ENCODE measurements at regions of chr3 and their contacts with region 1.

Region 1: GRCh38 chr3:150408221-150409102 is at the start of gene TSC22D2:
- DNase-seq: peak; percentile 94 to 99 (median 98)
- ATAC-seq: peak; percentile 79
- H3K4me3 ChIP-seq: peak within 1 kb of the TSS; percentile 96
- H3K4me3 Mint-ChIP-seq: peak within 1 kb of the TSS; percentile 88 to 98 (median 91)
- H3K27ac ChIP-seq: peak within 1 kb of the TSS; percentile 98
- H3K27ac Mint-ChIP-seq: peak within 1 kb of the TSS; percentile 89 to 100 (median 98)
- H3K4me1 ChIP-seq: peaks cover 7 to 8% of the 10 kb centered on the region in 2 donors
- H3K4me1 Mint-ChIP-seq: peaks cover 25 to 41% (median 39%) of the 10 kb centered on the region in 7 donors
- H3K27me3 ChIP-seq: no peaks in the 10 kb centered on the region
- H3K27me3 Mint-ChIP-seq: peaks cover 0 to 13% (median 0%) of the 10 kb centered on the region in 5 donors
- total RNA-seq, gene TSC22D2: 17.9 to 42.1 (median 27.3) TPM

Region 2: DNA sequence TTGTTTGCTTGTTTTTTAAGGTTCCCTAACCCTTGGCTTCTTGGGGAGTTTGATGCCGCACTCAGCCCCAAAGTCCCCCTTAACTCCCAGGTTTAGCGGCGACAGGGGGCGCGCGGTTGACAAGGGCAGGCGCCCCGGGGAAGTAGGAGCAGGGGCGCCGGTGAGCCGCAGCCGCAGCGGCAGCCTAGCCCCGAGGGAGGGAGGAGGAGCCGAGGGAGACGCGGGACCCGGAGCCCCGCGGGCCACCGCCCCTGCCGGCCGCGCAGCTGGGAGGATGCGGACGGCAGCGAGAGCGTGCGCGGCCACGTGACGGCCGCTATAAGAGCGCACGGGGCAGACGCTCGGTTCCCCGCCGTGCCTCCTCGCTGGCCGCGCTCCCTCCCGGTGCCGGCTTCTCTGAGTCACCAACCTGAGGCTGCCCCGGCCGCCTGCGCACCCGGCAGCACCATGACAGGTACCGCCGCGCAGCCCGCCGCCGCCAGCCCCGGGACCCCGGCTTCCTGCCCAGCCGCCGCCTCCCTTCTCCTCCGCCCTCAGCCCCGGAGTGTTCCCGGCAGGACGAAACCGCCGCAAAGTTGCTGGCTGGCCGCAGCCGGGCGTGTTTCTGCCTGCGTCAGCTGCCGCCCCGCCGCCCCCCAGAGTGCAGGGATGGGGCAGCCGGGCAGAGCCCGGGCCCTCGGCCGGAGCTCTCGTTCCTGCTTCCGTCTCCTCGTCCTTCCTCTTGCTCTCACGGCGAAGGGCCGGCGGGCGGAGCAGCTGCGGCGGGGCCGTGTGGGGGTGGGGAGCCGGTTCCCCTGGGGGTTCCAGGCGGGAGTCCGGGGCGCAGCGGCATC is 1417.1 kb before region 1 on chr3 and contains the start of gene GYG1:
- CTCF ChIA-PET with region 1: no interaction called
- POLR2A ChIA-PET with region 1: no interaction called
- intact Hi-C with region 1: loop called in 1 of 2 experiments (anchors 2 kb)
- DNase-seq: peak; percentile 56 to 78 (median 70)
- ATAC-seq: peak; percentile 91
- H3K4me3 ChIP-seq: peak within 1 kb of the TSS; percentile 77
- H3K4me3 Mint-ChIP-seq: peak within 1 kb of the TSS; percentile 70 to 91 (median 87)
- H3K27ac ChIP-seq: peak within 1 kb of the TSS; percentile 76
- H3K27ac Mint-ChIP-seq: peak within 1 kb of the TSS; percentile 41 to 87 (median 80)
- H3K4me1 ChIP-seq: peaks cover 8 to 16% of the 10 kb centered on the region in 2 donors
- H3K4me1 Mint-ChIP-seq: peaks cover 5 to 41% (median 28%) of the 10 kb centered on the region in 7 donors
- H3K27me3 ChIP-seq: no peaks in the 10 kb centered on the region
- H3K27me3 Mint-ChIP-seq: peaks cover 0 to 3% (median 0%) of the 10 kb centered on the region in 5 donors
- total RNA-seq, gene GYG1: 15.5 to 39.3 (median 16.2) TPM

Region 3: DNA sequence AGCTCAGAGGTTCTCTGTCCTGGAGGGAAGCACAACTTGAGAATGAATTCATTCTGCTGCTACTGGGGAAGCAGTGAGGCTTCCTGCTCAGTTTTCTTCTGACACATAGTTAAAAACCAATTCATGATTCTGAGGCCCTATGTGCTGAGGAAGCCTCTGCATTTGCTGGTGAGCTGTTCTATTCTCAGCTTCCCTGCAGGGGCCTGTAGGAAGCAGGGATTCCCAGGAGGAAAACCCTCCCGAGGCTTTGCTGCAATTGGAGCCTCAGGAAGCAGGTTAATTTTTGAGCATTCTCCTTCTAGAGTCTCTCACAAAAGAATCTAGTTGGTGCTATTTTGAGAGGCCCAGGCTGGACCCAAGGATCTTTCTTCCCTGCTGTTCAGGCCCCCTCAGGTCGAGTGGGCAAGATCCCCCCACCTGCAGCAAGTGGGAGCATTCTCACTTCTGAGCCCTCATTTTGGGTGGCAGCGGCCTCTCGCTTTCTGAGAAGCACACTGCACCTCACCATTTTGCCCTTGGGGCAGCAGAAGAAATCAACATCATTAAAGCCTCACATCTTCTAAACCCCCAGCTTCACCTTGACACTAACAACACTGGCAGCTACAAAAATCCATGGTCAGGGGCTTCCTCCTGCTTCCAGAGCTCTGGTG is 197.9 kb before region 1 on chr3:
- CTCF ChIA-PET with region 1: no interaction called
- POLR2A ChIA-PET with region 1: no interaction called
- intact Hi-C with region 1: no loop called
- DNase-seq: no peak
- ATAC-seq: no peak
- H3K4me3 ChIP-seq: no peak overlapping the region
- H3K4me3 Mint-ChIP-seq: no peak overlapping the region
- H3K27ac ChIP-seq: no peak overlapping the region
- H3K27ac Mint-ChIP-seq: no peak overlapping the region
- H3K4me1 ChIP-seq: no peaks in the 10 kb centered on the region
- H3K4me1 Mint-ChIP-seq: no peaks in the 10 kb centered on the region
- H3K27me3 ChIP-seq: no peaks in the 10 kb centered on the region
- H3K27me3 Mint-ChIP-seq: peaks cover 15 to 41% (median 25%) of the 10 kb centered on the region in 5 donors

Region 4: DNA sequence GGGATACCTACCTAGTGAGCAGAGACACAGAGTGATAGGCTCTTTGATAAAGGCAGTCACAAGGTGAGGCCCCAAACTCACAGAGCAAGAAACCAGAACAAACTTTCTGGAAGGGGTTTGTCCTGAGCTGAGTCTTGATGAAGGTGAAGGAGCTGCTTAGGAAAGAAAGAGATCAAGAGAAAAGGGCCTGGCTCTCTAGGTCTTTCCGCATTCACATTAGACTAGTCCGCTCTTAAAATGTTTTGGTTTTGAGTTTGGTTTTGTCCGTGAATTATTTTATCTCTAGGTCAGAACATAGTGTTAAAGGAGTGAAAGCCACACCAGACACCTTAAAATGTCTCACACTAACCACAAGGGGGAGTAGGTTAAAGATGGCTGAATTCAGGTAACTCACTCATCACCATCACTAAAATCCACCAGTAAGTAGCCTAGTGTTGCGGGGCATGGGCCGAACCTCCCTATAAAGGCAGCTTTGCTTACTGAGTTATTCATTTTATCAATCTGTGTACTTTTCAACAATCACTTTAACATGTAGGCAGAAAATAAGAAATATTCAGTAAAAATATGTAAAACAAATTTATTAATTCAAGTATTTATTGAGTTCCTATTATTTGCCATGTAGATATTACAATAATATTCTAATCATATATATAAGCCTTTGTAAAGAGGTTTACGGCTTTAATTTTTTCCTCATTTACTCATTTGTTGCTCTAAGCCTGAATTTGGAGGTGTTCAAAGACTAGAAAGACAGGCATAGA is 121.9 kb before region 1 on chr3:
- CTCF ChIA-PET with region 1: interaction called, 3 read pairs
- POLR2A ChIA-PET with region 1: no interaction called
- intact Hi-C with region 1: loop called in 1 of 2 experiments (anchors 1 kb)
- DNase-seq: peak in 7 of 9 donors; percentile 17 to 61 (median 50)
- ATAC-seq: peak; percentile 72
- H3K4me3 ChIP-seq: no peak overlapping the region
- H3K4me3 Mint-ChIP-seq: no peak overlapping the region
- H3K27ac ChIP-seq: no peak overlapping the region
- H3K27ac Mint-ChIP-seq: no peak overlapping the region
- H3K4me1 ChIP-seq: no peaks in the 10 kb centered on the region
- H3K4me1 Mint-ChIP-seq: no peaks in the 10 kb centered on the region
- H3K27me3 ChIP-seq: no peaks in the 10 kb centered on the region
- H3K27me3 Mint-ChIP-seq: peaks cover 4 to 69% (median 14%) of the 10 kb centered on the region in 5 donors

Region 5: GRCh38 chr3:150421799-150422548 is 13.5 kb after region 1 on chr3:
- CTCF ChIA-PET with region 1: interaction called, 4 read pairs
- POLR2A ChIA-PET with region 1: interaction called, 11 read pairs
- intact Hi-C with region 1: loop called in 1 of 2 experiments (anchors 1 kb)
- DNase-seq: no peak
- ATAC-seq: no peak
- H3K4me3 ChIP-seq: no peak overlapping the region
- H3K4me3 Mint-ChIP-seq: no peak overlapping the region
- H3K27ac ChIP-seq: no peak overlapping the region
- H3K27ac Mint-ChIP-seq: peak overlapping the region in 2 of 9 donors; percentile 51 to 53
- H3K4me1 ChIP-seq: peaks cover 0 to 8% of the 10 kb centered on the region in 2 donors
- H3K4me1 Mint-ChIP-seq: peaks cover 24 to 77% (median 68%) of the 10 kb centered on the region in 7 donors
- H3K27me3 ChIP-seq: no peaks in the 10 kb centered on the region
- H3K27me3 Mint-ChIP-seq: no peaks in the 10 kb centered on the region

Region 6: DNA sequence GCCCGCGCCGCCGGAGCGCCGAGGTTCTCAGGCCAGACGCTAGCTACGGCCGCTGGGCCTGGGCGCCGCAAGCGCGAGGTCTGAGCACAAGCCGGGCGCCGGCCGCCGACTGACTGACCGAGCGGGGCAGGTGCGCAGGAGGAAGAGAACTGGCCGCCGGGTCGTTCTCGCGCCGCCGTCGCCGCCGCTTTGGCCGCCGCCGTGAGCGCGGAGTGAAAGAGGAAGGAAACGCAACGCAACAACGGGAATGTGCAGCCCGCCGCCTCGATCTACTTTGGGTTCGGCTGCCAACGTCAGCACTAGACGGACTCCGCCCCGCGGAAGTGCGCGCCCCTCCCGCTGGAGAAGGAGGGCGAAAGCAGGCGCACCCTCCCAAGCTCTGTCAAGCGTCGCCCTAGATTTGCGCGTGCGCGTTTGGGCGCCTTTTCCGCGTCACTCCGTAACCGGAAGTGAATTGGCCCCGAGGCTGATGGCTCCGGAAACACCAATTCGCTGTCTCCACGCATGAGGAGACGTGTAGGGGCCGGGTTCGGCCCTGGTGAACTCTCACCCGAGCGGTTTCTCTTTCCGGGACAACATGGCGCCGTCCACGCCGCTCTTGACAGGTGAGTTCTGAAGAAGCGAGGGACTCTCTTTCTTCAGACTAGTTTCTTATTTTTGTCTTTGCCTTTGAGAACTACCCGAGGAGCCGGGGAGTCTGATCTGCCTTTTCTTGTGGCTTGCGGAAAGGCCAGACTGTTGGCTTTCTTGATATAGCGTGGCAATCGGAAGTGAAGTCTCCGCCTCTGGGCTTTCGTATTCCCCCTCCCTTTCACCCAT is 138.0 kb after region 1 on chr3 and contains the starts of genes EIF2A and SERP1:
- CTCF ChIA-PET with region 1: no interaction called
- POLR2A ChIA-PET with region 1: interaction called, 69 read pairs
- intact Hi-C with region 1: loop called (anchors 1 kb)
- DNase-seq: peak; percentile 97 to 100 (median 100)
- ATAC-seq: peak; percentile 94
- H3K4me3 ChIP-seq: peak within 1 kb of the TSS; percentile 78
- H3K4me3 Mint-ChIP-seq: peak within 1 kb of the TSS; percentile 88 to 99 (median 96)
- H3K27ac ChIP-seq: peak within 1 kb of the TSS; percentile 96
- H3K27ac Mint-ChIP-seq: peak within 1 kb of the TSS; percentile 93 to 100 (median 98)
- H3K4me1 ChIP-seq: peaks cover 15 to 23% of the 10 kb centered on the region in 2 donors
- H3K4me1 Mint-ChIP-seq: peaks cover 34 to 84% (median 79%) of the 10 kb centered on the region in 7 donors
- H3K27me3 ChIP-seq: no peaks in the 10 kb centered on the region
- H3K27me3 Mint-ChIP-seq: no peaks in the 10 kb centered on the region
- total RNA-seq, gene EIF2A: 94.7 to 135 (median 105) TPM
- total RNA-seq, gene SERP1: 89.4 to 120 (median 115) TPM

Region 7: DNA sequence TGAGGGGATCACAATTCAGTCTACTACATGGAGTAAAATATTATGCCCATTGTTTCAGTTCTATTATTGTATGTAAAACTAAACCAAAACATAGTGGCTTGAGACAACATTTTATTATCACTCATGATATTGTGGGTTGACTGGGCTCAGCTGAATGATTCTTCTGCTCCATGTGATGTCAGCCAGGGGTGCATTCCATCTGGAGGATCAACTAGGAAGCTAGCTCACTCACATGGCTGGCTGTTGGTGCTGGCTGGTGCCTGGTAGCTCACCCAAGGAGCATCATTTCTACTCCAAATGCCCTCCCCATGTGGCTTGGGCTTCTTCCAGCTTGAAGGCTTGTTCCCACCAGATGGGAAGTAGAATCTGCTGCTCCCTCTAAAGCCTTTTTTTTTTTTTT is 615.9 kb after region 1 on chr3:
- CTCF ChIA-PET with region 1: no interaction called
- POLR2A ChIA-PET with region 1: no interaction called
- intact Hi-C with region 1: no loop called
- DNase-seq: no peak
- ATAC-seq: no peak
- H3K4me3 ChIP-seq: no peak overlapping the region
- H3K4me3 Mint-ChIP-seq: no peak overlapping the region
- H3K27ac ChIP-seq: no peak overlapping the region
- H3K27ac Mint-ChIP-seq: no peak overlapping the region
- H3K4me1 ChIP-seq: no peaks in the 10 kb centered on the region
- H3K4me1 Mint-ChIP-seq: no peaks in the 10 kb centered on the region
- H3K27me3 ChIP-seq: peaks cover 0 to 6% of the 10 kb centered on the region in 2 donors
- H3K27me3 Mint-ChIP-seq: peaks cover 0 to 14% (median 13%) of the 10 kb centered on the region in 5 donors

Region 8: GRCh38 chr3:151276687-151277042 is 868.2 kb after region 1 on chr3:
- CTCF ChIA-PET with region 1: no interaction called
- POLR2A ChIA-PET with region 1: no interaction called
- intact Hi-C with region 1: loop called in 1 of 2 experiments (anchors 10 kb)
- DNase-seq: peak in 8 of 9 donors; percentile 12 to 56 (median 25)
- ATAC-seq: peak; percentile 85
- H3K4me3 ChIP-seq: no peak overlapping the region
- H3K4me3 Mint-ChIP-seq: peak overlapping the region; percentile 8 to 76 (median 44)
- H3K27ac ChIP-seq: no peak overlapping the region
- H3K27ac Mint-ChIP-seq: peak overlapping the region; percentile 1 to 93 (median 67)
- H3K4me1 ChIP-seq: peaks cover 20 to 21% of the 10 kb centered on the region in 2 donors
- H3K4me1 Mint-ChIP-seq: peaks cover 21 to 63% (median 43%) of the 10 kb centered on the region in 7 donors
- H3K27me3 ChIP-seq: no peaks in the 10 kb centered on the region
- H3K27me3 Mint-ChIP-seq: no peaks in the 10 kb centered on the region

Measured in naive thymus-derived CD4-positive, alpha-beta T cell (primary cell).